ENCODE measurements at regions of chr12 and their contacts with region 1.

Region 1: DNA sequence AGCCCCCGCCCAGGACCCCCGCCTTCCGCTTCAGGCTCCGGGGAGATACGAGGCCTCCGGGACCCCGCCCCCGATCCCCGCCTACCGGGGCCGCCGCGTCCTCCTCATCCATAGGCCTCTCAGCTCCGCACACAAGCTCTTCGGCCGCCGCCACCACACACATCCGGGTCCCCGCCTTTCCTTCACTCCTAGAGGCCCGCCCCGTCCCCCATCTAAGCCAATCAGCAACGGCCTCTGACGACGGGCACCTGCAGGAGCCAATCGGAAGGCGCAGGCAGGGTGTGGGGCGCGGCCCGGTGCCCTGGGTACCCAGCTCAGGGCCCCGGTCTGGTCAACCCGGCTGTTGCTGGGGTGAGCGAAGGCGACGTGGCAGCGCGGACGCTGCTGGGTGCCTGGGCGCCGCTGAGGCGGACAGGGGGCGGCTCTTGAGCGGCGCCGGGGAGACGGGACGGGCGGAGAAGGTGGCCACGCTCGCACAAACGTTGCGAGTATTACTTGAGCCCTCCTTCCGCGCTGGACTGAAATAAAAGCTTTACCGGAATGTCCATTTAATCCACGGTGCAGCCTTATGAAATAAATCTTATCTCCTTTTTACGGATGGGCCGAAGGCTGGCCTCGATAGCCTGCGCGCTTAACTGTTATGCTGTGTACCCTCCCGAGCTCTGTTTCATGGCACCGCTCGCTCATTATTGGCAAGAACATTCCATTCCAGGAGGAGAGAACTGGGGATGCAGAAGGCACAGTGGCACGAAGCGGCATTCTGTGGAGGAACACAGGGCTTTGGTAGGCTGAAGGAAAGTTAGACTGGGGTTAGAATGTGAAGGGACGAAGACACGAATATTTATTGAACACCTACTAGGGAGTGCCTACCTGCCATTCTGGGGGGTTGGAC is at the start of gene SPRYD3:
- DNase-seq: peak; percentile 99
- H3K4me3 Mint-ChIP-seq: peak within 1 kb of the TSS; percentile 93
- H3K27ac Mint-ChIP-seq: peak within 1 kb of the TSS; percentile 93
- H3K4me1 Mint-ChIP-seq: peaks cover 23% of the 10 kb centered on the region
- H3K27me3 Mint-ChIP-seq: peaks cover 2% of the 10 kb centered on the region
- total RNA-seq, gene SPRYD3: 35.6 TPM in 2 replicates

Region 2: GRCh38 chr12:53047221-53048042 is 32.0 kb before region 1 on chr12:
- intact Hi-C with region 1: loop called (anchors 2 kb)
- DNase-seq: peak; percentile 93
- H3K4me3 Mint-ChIP-seq: peak overlapping the region; percentile 90
- H3K27ac Mint-ChIP-seq: peak overlapping the region; percentile 52
- H3K4me1 Mint-ChIP-seq: peaks cover 29% of the 10 kb centered on the region
- H3K27me3 Mint-ChIP-seq: no peaks in the 10 kb centered on the region

Region 3: GRCh38 chr12:53054112-53054833 is 25.2 kb before region 1 on chr12:
- intact Hi-C with region 1: loop called (anchors 2 kb)
- DNase-seq: peak; percentile 97
- H3K4me3 Mint-ChIP-seq: peak overlapping the region; percentile 98
- H3K27ac Mint-ChIP-seq: peak overlapping the region; percentile 93
- H3K4me1 Mint-ChIP-seq: peaks cover 13% of the 10 kb centered on the region
- H3K27me3 Mint-ChIP-seq: peaks cover 4% of the 10 kb centered on the region

Region 4: GRCh38 chr12:53098982-53099651 is 19.6 kb after region 1 on chr12:
- intact Hi-C with region 1: loop called (anchors 1 kb)
- DNase-seq: peak; percentile 96
- H3K4me3 Mint-ChIP-seq: peak overlapping the region; percentile 77
- H3K27ac Mint-ChIP-seq: peak overlapping the region; percentile 58
- H3K4me1 Mint-ChIP-seq: peaks cover 40% of the 10 kb centered on the region
- H3K27me3 Mint-ChIP-seq: peaks cover 23% of the 10 kb centered on the region

Measured in activated CD4-positive, alpha-beta T cell treated with anti-CD3 and anti-CD28 coated beads, Interleukin-2, amount 10 ng/mL, durations not matched to agents 24 days and 14 days (primary cell).